GM10248 (cell line): ENCODE measurements at regions of chr17 and their contacts with region 1.

Region 1: GRCh38 chr17:39153599-39154051 is 2.2 kb upstream of the PLXDC1 start:
- DNase-seq: peak; percentile 75
- CTCF ChIP-seq: no peak

Region 2: GRCh38 chr17:38509008-38509771 is 644.4 kb before region 1 on chr17:
- CTCF ChIA-PET with region 1: no interaction called
- POLR2A ChIA-PET with region 1: no interaction called
- DNase-seq: peak; percentile 88
- CTCF ChIP-seq: peak; percentile 52

Region 3: GRCh38 chr17:38789185-38789584 is 364.4 kb before region 1 on chr17:
- CTCF ChIA-PET with region 1: no interaction called
- POLR2A ChIA-PET with region 1: no interaction called
- DNase-seq: no peak
- CTCF ChIP-seq: no peak

Region 4: GRCh38 chr17:39071573-39071972 is 82.1 kb before region 1 on chr17:
- CTCF ChIA-PET with region 1: interaction called, 26 read pairs
- POLR2A ChIA-PET with region 1: no interaction called
- DNase-seq: no peak
- CTCF ChIP-seq: no peak

Region 5: DNA sequence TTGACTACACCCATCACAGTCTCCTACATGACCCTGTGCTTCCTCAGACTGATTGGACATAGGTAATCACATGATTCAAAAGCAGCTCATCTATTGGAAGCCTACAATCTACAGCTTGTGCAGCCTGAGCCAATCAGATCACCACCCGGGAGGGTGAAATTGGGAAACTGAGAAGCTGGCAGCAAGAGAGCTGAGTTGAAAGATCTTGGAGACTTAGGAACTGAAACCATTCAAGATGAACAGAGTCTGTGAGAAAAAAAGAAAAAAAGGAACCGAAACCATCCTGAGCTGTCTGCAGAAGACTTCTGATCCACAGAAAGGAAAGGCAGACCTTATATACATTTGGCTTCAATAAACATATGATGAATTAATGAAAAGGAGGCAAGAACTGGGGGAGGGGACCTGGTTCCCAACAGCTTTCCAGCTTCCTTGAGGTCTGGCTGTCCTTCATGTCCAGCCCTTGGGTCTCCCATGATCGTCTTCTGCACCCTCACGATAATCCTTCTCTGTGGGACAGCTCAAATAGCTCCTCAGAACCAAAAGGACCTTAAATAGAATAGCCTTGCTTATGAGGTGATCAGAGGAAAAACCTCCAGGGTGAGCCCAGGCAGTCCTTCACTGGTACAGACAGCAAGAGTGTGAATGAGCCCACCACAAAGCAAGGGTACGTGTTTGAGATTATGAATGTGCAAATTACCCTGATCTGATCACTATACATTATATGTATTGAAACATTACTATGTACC is 34.8 kb before region 1 on chr17:
- CTCF ChIA-PET with region 1: interaction called, 16 read pairs
- POLR2A ChIA-PET with region 1: no interaction called
- DNase-seq: peak; percentile 74
- CTCF ChIP-seq: no peak

Region 6: GRCh38 chr17:39164675-39165143 is 11.1 kb after region 1 on chr17:
- CTCF ChIA-PET with region 1: interaction called, 71 read pairs
- POLR2A ChIA-PET with region 1: interaction called, 3 read pairs
- DNase-seq: peak; percentile 97
- CTCF ChIP-seq: peak; percentile 75

Region 7: DNA sequence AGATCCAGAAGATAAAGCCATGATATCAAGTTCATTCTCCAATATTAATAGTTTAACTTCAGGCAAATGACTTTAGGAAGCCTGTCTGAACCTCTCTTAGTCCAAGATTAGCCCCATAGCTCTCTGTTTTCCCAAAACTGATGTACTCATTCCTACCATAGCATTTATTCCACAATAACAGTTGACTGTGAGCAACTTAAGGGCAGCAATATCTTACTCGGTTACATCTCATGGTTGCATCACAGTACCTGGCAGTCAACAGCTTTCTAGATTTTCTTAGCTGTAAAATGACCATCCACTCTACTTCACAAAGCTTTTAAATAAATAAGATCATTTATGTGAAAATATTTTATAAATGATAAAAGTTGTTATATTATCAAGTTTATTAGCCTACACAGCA is 130.3 kb after region 1 on chr17:
- CTCF ChIA-PET with region 1: no interaction called
- POLR2A ChIA-PET with region 1: no interaction called
- DNase-seq: no peak
- CTCF ChIP-seq: no peak